ENCODE measurements at regions of chr1 and their contacts with region 1.

Region 1: DNA sequence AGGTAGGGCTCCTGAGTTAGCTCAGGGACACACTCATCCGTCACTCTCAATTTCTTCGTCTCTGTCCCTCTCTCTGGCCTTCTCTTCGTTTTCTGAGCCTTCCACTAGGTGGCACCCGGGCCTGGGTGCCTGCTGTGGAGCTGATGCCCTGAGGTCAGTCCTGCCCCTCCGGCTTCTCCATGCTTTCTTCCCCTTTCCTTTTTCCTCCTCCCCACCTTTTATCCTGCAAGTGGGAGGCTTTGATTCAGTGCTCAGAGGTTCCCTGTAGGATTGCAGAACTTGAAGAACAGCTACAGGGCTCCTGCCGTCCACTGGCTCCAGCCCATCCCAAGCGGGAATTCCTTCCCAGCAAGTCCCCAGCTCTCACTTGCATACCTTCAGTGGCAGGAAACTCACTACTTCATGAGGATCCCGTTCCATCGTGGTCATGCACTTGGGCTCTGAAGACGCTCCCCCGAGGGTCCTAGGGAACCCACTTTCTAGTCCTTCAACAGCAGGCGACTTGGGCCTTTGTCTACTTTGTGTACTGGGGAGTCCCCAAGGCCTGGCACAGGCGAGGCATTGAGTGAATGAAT is 45.6 kb downstream of the SRRM1 start:
- DNase-seq: peak; percentile 85
- H3K4me3 ChIP-seq: no peak overlapping the region
- H3K27ac ChIP-seq: no peak overlapping the region
- H3K4me1 ChIP-seq: peaks cover 0 to 9% (median 5%) of the 10 kb centered on the region in 4 donors
- H3K27me3 ChIP-seq: no peaks in the 10 kb centered on the region
- CTCF ChIP-seq: peak; percentile 82 to 88 (median 86)
- EP300 ChIP-seq: no peak
- POLR2A ChIP-seq: no peak

Region 2: GRCh38 chr1:24085546-24085945 is 603.2 kb before region 1 on chr1:
- intact Hi-C with region 1: no loop called
- DNase-seq: no peak
- H3K4me3 ChIP-seq: no peak overlapping the region
- H3K27ac ChIP-seq: no peak overlapping the region
- H3K4me1 ChIP-seq: no peaks in the 10 kb centered on the region
- H3K27me3 ChIP-seq: no peaks in the 10 kb centered on the region
- CTCF ChIP-seq: no peak
- EP300 ChIP-seq: no peak
- POLR2A ChIP-seq: no peak

Region 3: DNA sequence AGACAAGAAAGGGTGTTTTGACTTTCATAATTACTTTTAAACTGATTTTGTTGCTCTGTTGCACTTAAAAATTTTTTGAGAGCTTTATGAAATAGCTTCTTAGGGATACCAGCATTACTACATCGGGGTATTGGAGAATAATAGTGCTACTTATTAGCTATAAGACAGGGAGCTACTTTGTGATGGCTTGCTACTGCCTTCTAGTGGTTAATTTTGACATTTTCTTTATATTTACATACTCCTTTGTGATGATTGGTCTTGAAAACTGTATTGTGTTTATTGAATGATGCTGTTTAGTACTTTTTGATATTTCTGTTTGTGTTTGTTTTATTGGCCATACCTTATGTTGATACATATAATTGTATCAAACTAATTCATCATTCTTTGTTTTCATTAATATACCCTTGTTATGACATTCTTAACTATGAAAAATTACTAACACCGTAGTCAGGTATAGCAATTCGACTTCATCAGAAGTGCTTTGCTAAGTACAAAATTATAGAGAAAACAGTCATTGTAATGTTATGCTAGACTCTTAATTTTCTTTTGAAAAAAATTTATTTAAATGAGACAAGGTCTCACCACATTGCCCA is 142.1 kb after region 1 on chr1:
- intact Hi-C with region 1: loop called (anchors 2 kb)
- DNase-seq: no peak
- H3K4me3 ChIP-seq: no peak overlapping the region
- H3K27ac ChIP-seq: peak overlapping the region in 2 of 4 donors; percentile 6 to 32
- H3K4me1 ChIP-seq: peaks cover 0 to 59% (median 48%) of the 10 kb centered on the region in 4 donors
- H3K27me3 ChIP-seq: no peaks in the 10 kb centered on the region
- CTCF ChIP-seq: peak; percentile 58 to 85 (median 68)
- EP300 ChIP-seq: no peak
- POLR2A ChIP-seq: no peak